ENCODE measurements at regions of chr9 and their contacts with region 1.

Region 1: GRCh38 chr9:19379697-19380046 is 364 bp downstream of the RPS6 start:
- DNase-seq: peak; percentile 75
- ATAC-seq: peak; percentile 47

Region 2: GRCh38 chr9:19085295-19085694 is 294.4 kb before region 1 on chr9:
- intact Hi-C with region 1: loop called (anchors 10 kb)
- DNase-seq: no peak
- ATAC-seq: no peak

Region 3: DNA sequence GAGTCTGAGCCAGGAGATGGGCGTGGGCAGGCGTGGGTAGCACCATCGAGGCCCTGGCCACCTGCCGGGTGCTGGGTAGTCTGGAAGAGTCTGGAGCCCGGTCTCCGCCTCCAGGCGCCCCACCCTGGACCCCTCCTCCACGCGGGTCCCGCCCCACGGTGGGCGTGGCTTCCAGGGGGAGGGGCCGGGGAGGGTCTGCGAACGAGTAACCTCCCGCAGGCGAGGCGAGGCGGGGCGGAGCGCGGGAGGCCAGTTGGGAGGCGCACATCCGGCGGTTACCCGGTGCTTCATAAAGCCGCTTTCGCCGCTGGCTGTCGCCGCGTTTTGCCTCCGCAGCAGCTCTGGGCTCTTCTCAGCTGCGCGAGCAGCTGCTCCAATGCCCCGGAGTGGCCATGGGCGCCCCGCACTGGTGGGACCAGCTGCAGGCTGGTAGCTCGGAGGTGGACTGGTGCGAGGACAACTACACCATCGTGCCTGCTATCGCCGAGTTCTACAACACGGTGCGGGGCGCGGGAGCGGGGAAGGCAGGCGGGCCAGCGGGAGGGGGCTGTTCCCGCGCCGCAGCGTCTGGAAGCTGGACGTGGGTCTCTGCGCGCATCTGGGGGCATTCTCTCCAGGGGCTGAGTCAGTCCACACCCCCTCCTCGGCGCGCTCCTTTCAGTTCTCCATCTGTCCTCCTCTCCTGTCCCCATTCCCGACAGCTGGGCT is 29.2 kb after region 1 on chr9 and contains the start of gene ACER2:
- intact Hi-C with region 1: loop called (anchors 2 kb)
- DNase-seq: peak; percentile 98
- ATAC-seq: peak; percentile 98
- total RNA-seq, gene ACER2: 3.2 TPM